Naive thymus-derived CD4-positive, alpha-beta T cell (primary cell): ENCODE measurements at regions of chr3 and their contacts with region 1.

Region 1: DNA sequence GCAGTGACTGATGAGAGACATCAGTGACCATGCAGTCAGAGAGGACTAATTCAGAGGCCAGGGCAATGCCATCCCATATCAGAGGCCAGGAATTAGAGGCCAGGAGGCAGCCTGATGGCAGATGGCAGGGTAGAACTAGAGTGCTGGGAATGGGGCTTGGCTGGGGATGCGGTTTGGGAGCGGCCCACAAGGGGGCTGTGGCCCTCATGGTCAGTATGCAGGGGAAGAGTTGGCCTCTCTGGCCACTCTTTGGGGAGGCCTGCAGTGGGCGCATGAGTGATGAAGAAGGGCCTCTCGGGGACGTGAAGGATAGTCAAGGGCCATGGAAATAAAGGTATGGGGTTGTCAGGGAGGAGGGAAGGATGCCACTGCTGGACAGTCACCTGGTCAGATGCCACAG is 101.7 kb downstream of the EEFSEC start:
- DNase-seq: no peak
- ATAC-seq: no peak
- H3K4me3 ChIP-seq: no peak overlapping the region
- H3K4me3 Mint-ChIP-seq: no peak overlapping the region
- H3K27ac ChIP-seq: no peak overlapping the region
- H3K27ac Mint-ChIP-seq: peak overlapping the region in 2 of 9 donors; percentile 54 to 87
- H3K4me1 ChIP-seq: no peaks in the 10 kb centered on the region
- H3K4me1 Mint-ChIP-seq: peaks cover 0 to 60% (median 54%) of the 10 kb centered on the region in 7 donors
- H3K27me3 ChIP-seq: no peaks in the 10 kb centered on the region
- H3K27me3 Mint-ChIP-seq: no peaks in the 10 kb centered on the region

Region 2: DNA sequence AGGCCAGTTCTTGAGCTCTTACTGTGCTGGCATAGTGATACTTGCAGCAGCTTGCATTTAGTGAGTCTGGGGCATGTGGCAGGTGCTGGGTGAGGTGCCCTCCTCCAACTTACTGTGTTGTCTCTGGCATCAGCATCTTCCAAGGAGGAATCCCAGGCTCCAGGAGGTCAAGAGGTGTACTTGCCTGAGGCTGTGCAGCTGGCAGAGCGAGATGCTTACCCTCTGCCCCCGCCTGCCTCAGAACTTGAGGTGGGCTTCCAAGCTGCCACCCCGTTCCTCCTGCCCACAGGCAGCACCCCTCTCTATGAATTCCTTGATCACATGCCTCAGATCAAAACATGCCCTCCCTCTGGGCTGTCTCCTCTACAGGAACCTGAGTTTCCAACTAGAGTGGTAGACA is 15.7 kb before region 1 on chr3:
- CTCF ChIA-PET with region 1: no interaction called
- POLR2A ChIA-PET with region 1: no interaction called
- intact Hi-C with region 1: loop called in 1 of 2 experiments (anchors 1 kb)
- DNase-seq: no peak
- ATAC-seq: no peak
- H3K4me3 ChIP-seq: no peak overlapping the region
- H3K4me3 Mint-ChIP-seq: no peak overlapping the region
- H3K27ac ChIP-seq: no peak overlapping the region
- H3K27ac Mint-ChIP-seq: peak overlapping the region in 6 of 9 donors; percentile 15 to 75 (median 53)
- H3K4me1 ChIP-seq: peaks cover 0 to 11% of the 10 kb centered on the region in 2 donors
- H3K4me1 Mint-ChIP-seq: peaks cover 11 to 76% (median 56%) of the 10 kb centered on the region in 7 donors
- H3K27me3 ChIP-seq: no peaks in the 10 kb centered on the region
- H3K27me3 Mint-ChIP-seq: no peaks in the 10 kb centered on the region

Region 3: GRCh38 chr3:129469026-129469425 is 1214.1 kb after region 1 on chr3:
- CTCF ChIA-PET with region 1: no interaction called
- POLR2A ChIA-PET with region 1: no interaction called
- intact Hi-C with region 1: loop called in 1 of 2 experiments (anchors 5 kb)
- DNase-seq: peak in 3 of 9 donors; percentile 15 to 44 (median 16)
- ATAC-seq: no peak
- H3K4me3 ChIP-seq: no peak overlapping the region
- H3K4me3 Mint-ChIP-seq: no peak overlapping the region
- H3K27ac ChIP-seq: no peak overlapping the region
- H3K27ac Mint-ChIP-seq: peak overlapping the region in 6 of 9 donors; percentile 4 to 71 (median 27)
- H3K4me1 ChIP-seq: no peaks in the 10 kb centered on the region
- H3K4me1 Mint-ChIP-seq: peaks cover 2 to 17% (median 8%) of the 10 kb centered on the region in 7 donors
- H3K27me3 ChIP-seq: no peaks in the 10 kb centered on the region
- H3K27me3 Mint-ChIP-seq: no peaks in the 10 kb centered on the region